ENCODE measurements at regions of chr7 and their contacts with region 1.

Region 1: DNA sequence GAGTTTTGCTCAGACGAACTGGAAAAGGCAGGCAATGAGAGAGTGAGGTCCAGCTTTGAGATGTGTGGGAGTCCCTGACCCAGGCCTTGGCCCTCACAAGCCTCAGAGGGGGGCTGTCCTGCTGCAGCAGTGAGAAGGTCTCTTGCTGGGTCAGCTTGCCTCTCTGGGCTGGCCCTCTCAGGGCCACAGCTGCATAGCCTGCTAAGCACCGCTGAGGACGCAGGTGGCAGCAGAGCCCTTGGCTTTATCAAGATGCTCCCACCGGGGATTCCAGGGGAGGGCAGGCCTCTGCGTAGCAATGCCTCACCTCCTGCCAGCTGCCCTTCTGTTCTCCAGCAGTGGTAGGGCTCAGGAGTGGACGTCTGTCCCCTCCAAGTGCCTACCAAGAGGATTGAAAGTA is 128.7 kb downstream of the COBL start:
- DNase-seq: peak; percentile 29 to 76 (median 67)
- ATAC-seq: peak; percentile 55 to 81 (median 74)
- H3K4me3 ChIP-seq: no peak overlapping the region
- H3K27ac ChIP-seq: peak overlapping the region in 9 of 12 donors; percentile 16 to 77 (median 46)
- H3K4me1 ChIP-seq: peaks cover 0 to 40% (median 14%) of the 10 kb centered on the region in 12 donors
- H3K27me3 ChIP-seq: no peaks in the 10 kb centered on the region
- CTCF ChIP-seq: peak in 10 of 12 donors; percentile 10 to 48 (median 26)
- POLR2A ChIP-seq: no peak

Region 2: GRCh38 chr7:51224811-51225612 is 37.1 kb after region 1 on chr7:
- intact Hi-C with region 1: loop called in 1 of 10 experiments (anchors 5 kb)
- DNase-seq: no peak
- ATAC-seq: peak; percentile 43 to 62 (median 55)
- H3K4me3 ChIP-seq: no peak overlapping the region
- H3K27ac ChIP-seq: no peak overlapping the region
- H3K4me1 ChIP-seq: no peaks in the 10 kb centered on the region
- H3K27me3 ChIP-seq: no peaks in the 10 kb centered on the region
- CTCF ChIP-seq: peak in 8 of 12 donors; percentile 9 to 44 (median 22)
- POLR2A ChIP-seq: no peak

Region 3: DNA sequence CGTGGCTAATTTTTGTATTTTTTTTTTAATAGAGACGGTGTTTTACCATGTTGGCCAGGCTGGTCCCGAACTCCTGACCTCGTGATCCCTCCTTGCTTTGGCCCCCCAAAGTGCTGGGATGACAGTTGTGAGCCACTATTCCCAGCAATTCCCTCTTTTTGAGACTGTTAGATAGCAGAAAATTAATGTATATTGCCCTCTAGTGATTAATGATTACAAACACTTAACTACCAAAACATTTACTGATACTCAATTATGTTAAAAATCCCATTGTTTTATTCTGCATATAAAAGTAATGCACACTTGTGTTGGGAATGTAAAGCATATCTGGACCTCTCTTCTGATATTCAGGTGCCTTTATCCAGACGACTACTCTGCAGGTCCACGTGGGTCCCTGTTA is 169.9 kb after region 1 on chr7:
- intact Hi-C with region 1: loop called in 4 of 10 experiments (anchors 2 to 5 kb)
- DNase-seq: no peak
- ATAC-seq: no peak
- H3K4me3 ChIP-seq: no peak overlapping the region
- H3K27ac ChIP-seq: peak overlapping the region in 6 of 12 donors; percentile 42 to 70 (median 62)
- H3K4me1 ChIP-seq: peaks cover 0 to 10% (median 0%) of the 10 kb centered on the region in 12 donors
- H3K27me3 ChIP-seq: no peaks in the 10 kb centered on the region
- CTCF ChIP-seq: peak in 5 of 12 donors; percentile 10 to 33 (median 14)
- POLR2A ChIP-seq: no peak